AG04449 (cell line): ENCODE measurements at regions of chr1 and their contacts with region 1.

Region 1: DNA sequence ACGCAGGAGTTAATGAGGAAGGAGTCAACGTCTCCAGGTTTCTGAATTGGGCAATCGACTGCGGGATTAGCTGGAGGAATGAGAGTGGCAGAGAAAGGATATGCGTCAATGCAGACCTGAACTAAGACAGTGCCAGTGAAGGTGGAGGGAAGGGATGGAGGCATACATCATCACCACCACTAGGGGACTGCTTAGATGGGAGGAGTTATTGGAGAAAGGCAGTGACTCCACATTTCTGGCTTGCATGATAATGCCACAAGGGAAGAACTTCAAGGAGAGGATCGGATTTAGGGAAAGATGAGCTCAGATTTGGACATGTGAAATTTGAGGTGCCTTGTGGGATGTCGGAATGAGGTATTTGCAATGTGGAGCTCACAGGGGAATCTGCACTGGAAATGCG is 17.5 kb downstream of the VASH2 start:
- DNase-seq: peak; percentile 33
- H3K4me3 ChIP-seq: no peak overlapping the region
- CTCF ChIP-seq: peak; percentile 72

Region 2: GRCh38 chr1:212950243-212951125 is 17.3 kb before region 1 on chr1 and contains the start of gene VASH2:
- CTCF ChIA-PET with region 1: interaction called, 32 read pairs
- POLR2A ChIA-PET with region 1: no interaction called
- DNase-seq: peak; percentile 7
- H3K4me3 ChIP-seq: peak within 1 kb of the TSS; percentile 63
- CTCF ChIP-seq: no peak

Region 3: GRCh38 chr1:212979340-212980122 is 11.7 kb after region 1 on chr1:
- CTCF ChIA-PET with region 1: interaction called, 11 read pairs
- POLR2A ChIA-PET with region 1: no interaction called
- DNase-seq: no peak
- H3K4me3 ChIP-seq: no peak overlapping the region
- CTCF ChIP-seq: no peak